ENCODE measurements at regions of chr7 and their contacts with region 1.

Region 1: GRCh38 chr7:79452032-79452494 is 1.4 kb downstream of the MAGI2 start:
- DNase-seq: peak; percentile 88
- H3K4me3 ChIP-seq: peak overlapping the region; percentile 78 to 84 (median 82)
- H3K27ac ChIP-seq: peak overlapping the region; percentile 78
- H3K4me1 ChIP-seq: peaks cover 19% of the 10 kb centered on the region
- H3K27me3 ChIP-seq: no peaks in the 10 kb centered on the region
- CTCF ChIP-seq: no peak
- POLR2A ChIP-seq: peak; percentile 74

Region 2: GRCh38 chr7:79386688-79387422 is 65.2 kb before region 1 on chr7:
- CTCF ChIA-PET with region 1: interaction called, 6 read pairs
- POLR2A ChIA-PET with region 1: no interaction called
- dilution Hi-C with region 1: no loop called
- intact Hi-C with region 1: loop called (anchors 1 kb)
- DNase-seq: peak; percentile 79
- H3K4me3 ChIP-seq: no peak overlapping the region
- H3K27ac ChIP-seq: peak overlapping the region; percentile 48
- H3K4me1 ChIP-seq: peaks cover 14% of the 10 kb centered on the region
- H3K27me3 ChIP-seq: no peaks in the 10 kb centered on the region
- CTCF ChIP-seq: no peak
- POLR2A ChIP-seq: no peak

Region 3: GRCh38 chr7:79622781-79623180 is 170.7 kb after region 1 on chr7:
- CTCF ChIA-PET with region 1: no interaction called
- POLR2A ChIA-PET with region 1: no interaction called
- dilution Hi-C with region 1: no loop called
- intact Hi-C with region 1: no loop called
- DNase-seq: peak; percentile 87
- H3K4me3 ChIP-seq: no peak overlapping the region
- H3K27ac ChIP-seq: no peak overlapping the region
- H3K4me1 ChIP-seq: peaks cover 25% of the 10 kb centered on the region
- H3K27me3 ChIP-seq: no peaks in the 10 kb centered on the region
- CTCF ChIP-seq: no peak
- POLR2A ChIP-seq: no peak

Measured in endothelial cell of umbilical vein (primary cell).